CD8-positive, alpha-beta T cell (primary cell): ENCODE measurements at regions of chr18 and their contacts with region 1.

Region 1: GRCh38 chr18:34787931-34788532 is 77.9 kb downstream of the DTNA start:
- DNase-seq: peak in 5 of 9 experiments; percentile 14 to 63 (median 32)
- ATAC-seq: peak; percentile 59
- H3K4me3 ChIP-seq: no peak overlapping the region
- H3K4me3 Mint-ChIP-seq: no peak overlapping the region
- H3K27ac ChIP-seq: no peak overlapping the region
- H3K27ac Mint-ChIP-seq: no peak overlapping the region
- H3K4me1 ChIP-seq: no peaks in the 10 kb centered on the region
- H3K4me1 Mint-ChIP-seq: peaks cover 6% of the 10 kb centered on the region
- H3K27me3 ChIP-seq: no peaks in the 10 kb centered on the region
- H3K27me3 Mint-ChIP-seq: peaks cover 16% of the 10 kb centered on the region
- CTCF ChIP-seq: peak; percentile 89

Region 2: GRCh38 chr18:33231474-33232317 is 1556.3 kb before region 1 on chr18:
- CTCF ChIA-PET with region 1: no interaction called
- POLR2A ChIA-PET with region 1: no interaction called
- intact Hi-C with region 1: loop called in 1 of 2 experiments (anchors 5 kb)
- DNase-seq: peak in 4 of 9 experiments; percentile 7 to 42 (median 17)
- ATAC-seq: peak; percentile 34
- H3K4me3 ChIP-seq: no peak overlapping the region
- H3K4me3 Mint-ChIP-seq: no peak overlapping the region
- H3K27ac ChIP-seq: no peak overlapping the region
- H3K27ac Mint-ChIP-seq: no peak overlapping the region
- H3K4me1 ChIP-seq: no peaks in the 10 kb centered on the region
- H3K4me1 Mint-ChIP-seq: no peaks in the 10 kb centered on the region
- H3K27me3 ChIP-seq: no peaks in the 10 kb centered on the region
- H3K27me3 Mint-ChIP-seq: no peaks in the 10 kb centered on the region
- CTCF ChIP-seq: peak; percentile 26

Region 3: GRCh38 chr18:33495278-33495677 is 1292.8 kb before region 1 on chr18:
- CTCF ChIA-PET with region 1: no interaction called
- POLR2A ChIA-PET with region 1: no interaction called
- intact Hi-C with region 1: no loop called
- DNase-seq: no peak
- ATAC-seq: no peak
- H3K4me3 ChIP-seq: no peak overlapping the region
- H3K4me3 Mint-ChIP-seq: no peak overlapping the region
- H3K27ac ChIP-seq: no peak overlapping the region
- H3K27ac Mint-ChIP-seq: no peak overlapping the region
- H3K4me1 ChIP-seq: no peaks in the 10 kb centered on the region
- H3K4me1 Mint-ChIP-seq: no peaks in the 10 kb centered on the region
- H3K27me3 ChIP-seq: no peaks in the 10 kb centered on the region
- H3K27me3 Mint-ChIP-seq: no peaks in the 10 kb centered on the region
- CTCF ChIP-seq: no peak